Heart left ventricle (tissue), 16 donors: ENCODE measurements at regions of chr11 and their contacts with region 1.

Region 1: GRCh38 chr11:61034704-61035525 is 63.4 kb downstream of the CD6 start:
- DNase-seq: no peak
- ATAC-seq: no peak
- H3K4me3 ChIP-seq: no peak overlapping the region
- H3K27ac ChIP-seq: no peak overlapping the region
- H3K4me1 ChIP-seq: peaks cover 0 to 2% (median 0%) of the 10 kb centered on the region in 12 donors
- H3K27me3 ChIP-seq: no peaks in the 10 kb centered on the region
- CTCF ChIP-seq: no peak
- POLR2A ChIP-seq: no peak

Region 2: GRCh38 chr11:60378354-60378753 is 656.6 kb before region 1 on chr11 and contains the start of gene MS4A7:
- intact Hi-C with region 1: no loop called
- DNase-seq: peak in 4 of 5 donors; percentile 28 to 66 (median 50)
- ATAC-seq: peak; percentile 45 to 83 (median 82)
- H3K4me3 ChIP-seq: peak within 1 kb of the TSS in 9 of 12 donors; percentile 3 to 56 (median 31)
- H3K27ac ChIP-seq: peak within 1 kb of the TSS in 6 of 12 donors; percentile 32 to 88 (median 54)
- H3K4me1 ChIP-seq: peaks cover 0 to 21% (median 0%) of the 10 kb centered on the region in 12 donors
- H3K27me3 ChIP-seq: no peaks in the 10 kb centered on the region
- CTCF ChIP-seq: no peak
- POLR2A ChIP-seq: no peak
- total RNA-seq, gene MS4A7: 5.4 to 57.1 (median 9.8) TPM

Region 3: GRCh38 chr11:61054927-61055562 is 20.1 kb after region 1 on chr11:
- intact Hi-C with region 1: no loop called
- DNase-seq: no peak
- ATAC-seq: no peak
- H3K4me3 ChIP-seq: no peak overlapping the region
- H3K27ac ChIP-seq: no peak overlapping the region
- H3K4me1 ChIP-seq: peaks cover 0 to 5% (median 0%) of the 10 kb centered on the region in 12 donors
- H3K27me3 ChIP-seq: no peaks in the 10 kb centered on the region
- CTCF ChIP-seq: no peak
- POLR2A ChIP-seq: no peak

Region 4: DNA sequence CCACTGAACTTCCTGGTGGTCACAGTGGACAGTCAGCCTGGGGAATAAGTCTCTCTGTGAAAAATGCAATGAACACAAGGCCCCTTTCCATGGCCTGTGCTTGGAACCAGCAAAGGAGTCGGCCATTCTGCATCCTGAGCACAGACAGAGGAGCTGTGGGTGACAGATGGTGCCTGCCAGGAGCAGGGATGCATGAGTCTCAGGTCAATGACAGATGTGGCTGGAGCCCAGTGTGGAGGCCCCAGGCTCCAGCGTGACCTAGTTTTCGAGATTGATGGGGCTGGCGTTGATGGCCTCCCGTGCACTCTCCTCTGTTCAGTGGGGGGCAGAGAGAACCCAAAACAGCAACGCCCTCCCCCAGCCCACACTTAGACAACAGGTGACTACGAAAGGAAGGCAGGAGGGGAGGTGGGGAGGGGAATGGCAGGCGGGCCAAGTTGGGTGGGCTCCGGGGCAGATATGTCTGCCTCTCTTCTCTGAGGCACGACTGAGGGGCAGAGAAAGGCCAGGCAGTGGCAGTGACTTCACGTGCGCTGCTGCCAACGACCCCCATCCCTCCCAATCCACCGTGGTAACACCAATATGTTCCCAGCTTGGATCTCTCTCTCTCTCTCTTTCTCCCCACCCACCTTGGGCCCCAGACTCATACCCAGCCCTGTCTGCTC is 33.0 kb after region 1 on chr11:
- intact Hi-C with region 1: loop called in 1 of 10 experiments (anchors 5 kb)
- DNase-seq: no peak
- ATAC-seq: no peak
- H3K4me3 ChIP-seq: no peak overlapping the region
- H3K27ac ChIP-seq: no peak overlapping the region
- H3K4me1 ChIP-seq: peaks cover 0 to 28% (median 7%) of the 10 kb centered on the region in 12 donors
- H3K27me3 ChIP-seq: no peaks in the 10 kb centered on the region
- CTCF ChIP-seq: no peak
- POLR2A ChIP-seq: no peak

Region 5: GRCh38 chr11:61120706-61121191 is 85.8 kb after region 1 on chr11:
- intact Hi-C with region 1: no loop called
- DNase-seq: no peak
- ATAC-seq: peak in 3 of 4 donors; percentile 38 to 59 (median 46)
- H3K4me3 ChIP-seq: no peak overlapping the region
- H3K27ac ChIP-seq: no peak overlapping the region
- H3K4me1 ChIP-seq: peaks cover 0 to 17% (median 4%) of the 10 kb centered on the region in 12 donors
- H3K27me3 ChIP-seq: no peaks in the 10 kb centered on the region
- CTCF ChIP-seq: no peak
- POLR2A ChIP-seq: no peak

Region 6: GRCh38 chr11:61860054-61860903 is 825.4 kb after region 1 on chr11:
- intact Hi-C with region 1: no loop called
- DNase-seq: peak; percentile 74 to 87 (median 77)
- ATAC-seq: peak; percentile 26 to 74 (median 56)
- H3K4me3 ChIP-seq: no peak overlapping the region
- H3K27ac ChIP-seq: peak overlapping the region in 10 of 12 donors; percentile 3 to 83 (median 74)
- H3K4me1 ChIP-seq: peaks cover 0 to 29% (median 11%) of the 10 kb centered on the region in 12 donors
- H3K27me3 ChIP-seq: no peaks in the 10 kb centered on the region
- CTCF ChIP-seq: no peak
- POLR2A ChIP-seq: no peak